ENCODE measurements at regions of chr12 and their contacts with region 1.

Region 1: GRCh38 chr12:19915392-19916195 is 452.7 kb upstream of the PDE3A start:
- DNase-seq: peak in 1 of 2 donors; percentile 26
- ATAC-seq: peak in 7 of 8 donors; percentile 62 to 84 (median 79)
- H3K4me3 ChIP-seq: no peak overlapping the region
- H3K27ac ChIP-seq: peak overlapping the region in 8 of 10 donors; percentile 11 to 67 (median 25)
- H3K4me1 ChIP-seq: peaks cover 0 to 19% (median 7%) of the 10 kb centered on the region in 9 donors
- H3K27me3 ChIP-seq: no peaks in the 10 kb centered on the region
- CTCF ChIP-seq: peak; percentile 36 to 70 (median 62)

Region 2: GRCh38 chr12:20212658-20213555 is 297.3 kb after region 1 on chr12:
- intact Hi-C with region 1: loop called in 4 of 10 experiments (anchors 5 to 10 kb)
- DNase-seq: peak; percentile 76 to 89
- ATAC-seq: peak; percentile 95 to 99 (median 98)
- H3K4me3 ChIP-seq: peak overlapping the region in 9 of 10 donors; percentile 0 to 37 (median 16)
- H3K27ac ChIP-seq: peak overlapping the region; percentile 53 to 86 (median 78)
- H3K4me1 ChIP-seq: peaks cover 5 to 48% (median 31%) of the 10 kb centered on the region in 9 donors
- H3K27me3 ChIP-seq: no peaks in the 10 kb centered on the region
- CTCF ChIP-seq: no peak

Region 3: DNA sequence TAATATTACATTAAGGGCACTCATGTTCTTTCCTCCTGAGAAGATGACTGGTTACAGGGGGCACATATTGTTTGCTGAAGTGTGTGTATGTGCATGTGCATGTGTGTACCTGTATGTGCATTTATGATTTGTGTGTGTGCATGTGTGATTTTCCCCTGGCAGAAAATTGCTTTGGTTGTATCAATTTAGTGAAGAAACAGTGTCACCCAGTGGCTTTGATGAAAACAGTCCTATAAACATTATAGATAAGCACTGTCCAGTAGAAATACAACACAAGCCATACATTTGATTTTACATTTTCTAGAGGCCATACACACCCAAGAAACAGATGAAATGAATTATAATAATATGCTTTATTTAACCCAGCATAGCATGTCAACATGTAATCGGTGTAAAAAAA is 461.4 kb after region 1 on chr12:
- intact Hi-C with region 1: loop called in 4 of 10 experiments (anchors 5 to 10 kb)
- DNase-seq: no peak
- ATAC-seq: peak in 7 of 8 donors; percentile 23 to 47 (median 36)
- H3K4me3 ChIP-seq: peak overlapping the region in 7 of 10 donors; percentile 2 to 79 (median 68)
- H3K27ac ChIP-seq: peak overlapping the region in 8 of 10 donors; percentile 16 to 97 (median 82)
- H3K4me1 ChIP-seq: peaks cover 0 to 51% (median 7%) of the 10 kb centered on the region in 9 donors
- H3K27me3 ChIP-seq: peaks cover 0 to 12% (median 0%) of the 10 kb centered on the region in 7 donors
- CTCF ChIP-seq: peak; percentile 18 to 58 (median 38)

Region 4: DNA sequence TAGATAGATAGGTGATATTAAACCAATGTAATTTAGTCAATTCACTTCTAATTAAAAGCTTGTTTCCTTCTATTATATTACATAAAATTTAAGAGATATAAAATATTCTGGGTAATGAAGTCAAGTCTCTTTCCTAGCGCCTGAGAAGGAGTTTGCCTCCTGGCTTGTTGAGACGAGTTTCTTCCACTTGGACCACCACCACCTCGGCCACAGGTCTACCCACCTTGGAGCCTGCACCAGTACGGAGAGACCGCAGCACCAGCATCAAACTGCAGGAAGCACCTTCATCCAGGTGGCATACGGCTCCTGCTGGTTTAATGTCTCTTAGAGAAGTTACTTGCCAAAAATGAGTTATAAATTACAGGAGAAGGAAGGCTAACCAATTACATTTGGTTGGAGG is 700.5 kb after region 1 on chr12:
- intact Hi-C with region 1: loop called in 2 of 10 experiments (anchors 10 kb)
- DNase-seq: no peak
- ATAC-seq: peak in 1 of 8 donors; percentile 55
- H3K4me3 ChIP-seq: no peak overlapping the region
- H3K27ac ChIP-seq: no peak overlapping the region
- H3K4me1 ChIP-seq: peaks cover 0 to 40% (median 8%) of the 10 kb centered on the region in 9 donors
- H3K27me3 ChIP-seq: no peaks in the 10 kb centered on the region
- CTCF ChIP-seq: no peak

Measured in heart right ventricle (tissue), 16 donors.